Esophagus squamous epithelium (tissue), 5 donors: ENCODE measurements at regions of chr7 and their contacts with region 1.

Region 1: GRCh38 chr7:7577888-7578287 is 11.2 kb downstream of the MIOS start:
- DNase-seq: no peak
- H3K4me3 ChIP-seq: no peak overlapping the region
- H3K27ac ChIP-seq: no peak overlapping the region
- H3K4me1 ChIP-seq: peaks cover 0 to 8% (median 0%) of the 10 kb centered on the region in 3 donors
- H3K27me3 ChIP-seq: no peaks in the 10 kb centered on the region
- CTCF ChIP-seq: no peak
- POLR2A ChIP-seq: no peak

Region 2: GRCh38 chr7:7443806-7444350 is 134.0 kb before region 1 on chr7:
- intact Hi-C with region 1: no loop called
- DNase-seq: no peak
- H3K4me3 ChIP-seq: no peak overlapping the region
- H3K27ac ChIP-seq: no peak overlapping the region
- H3K4me1 ChIP-seq: peaks cover 0 to 10% (median 0%) of the 10 kb centered on the region in 3 donors
- H3K27me3 ChIP-seq: no peaks in the 10 kb centered on the region
- CTCF ChIP-seq: no peak
- POLR2A ChIP-seq: no peak

Region 3: GRCh38 chr7:7639847-7640220 is 61.9 kb after region 1 on chr7:
- intact Hi-C with region 1: loop called (anchors 10 kb)
- DNase-seq: no peak
- H3K4me3 ChIP-seq: peak overlapping the region; percentile 55 to 94 (median 84)
- H3K27ac ChIP-seq: peak overlapping the region; percentile 93 to 98 (median 94)
- H3K4me1 ChIP-seq: peaks cover 7 to 26% (median 14%) of the 10 kb centered on the region in 3 donors
- H3K27me3 ChIP-seq: no peaks in the 10 kb centered on the region
- CTCF ChIP-seq: no peak
- POLR2A ChIP-seq: no peak

Region 4: GRCh38 chr7:7968543-7969305 is 390.8 kb after region 1 on chr7 and contains the start of gene GLCCI1:
- intact Hi-C with region 1: loop called (anchors 10 kb)
- DNase-seq: peak; percentile 86
- H3K4me3 ChIP-seq: peak within 1 kb of the TSS; percentile 82 to 97 (median 92)
- H3K27ac ChIP-seq: peak within 1 kb of the TSS; percentile 95 to 97 (median 97)
- H3K4me1 ChIP-seq: peaks cover 7 to 25% (median 13%) of the 10 kb centered on the region in 3 donors
- H3K27me3 ChIP-seq: no peaks in the 10 kb centered on the region
- CTCF ChIP-seq: peak in 1 of 6 experiments; percentile 3
- POLR2A ChIP-seq: peak in 3 of 4 donors; percentile 76 to 94 (median 86)
- total RNA-seq, gene GLCCI1: 1.5 to 9.9 (median 5.6) TPM